Right ventricle myocardium inferior (tissue), 1 donor: ENCODE measurements at regions of chr19 and their contacts with region 1.

Region 1: DNA sequence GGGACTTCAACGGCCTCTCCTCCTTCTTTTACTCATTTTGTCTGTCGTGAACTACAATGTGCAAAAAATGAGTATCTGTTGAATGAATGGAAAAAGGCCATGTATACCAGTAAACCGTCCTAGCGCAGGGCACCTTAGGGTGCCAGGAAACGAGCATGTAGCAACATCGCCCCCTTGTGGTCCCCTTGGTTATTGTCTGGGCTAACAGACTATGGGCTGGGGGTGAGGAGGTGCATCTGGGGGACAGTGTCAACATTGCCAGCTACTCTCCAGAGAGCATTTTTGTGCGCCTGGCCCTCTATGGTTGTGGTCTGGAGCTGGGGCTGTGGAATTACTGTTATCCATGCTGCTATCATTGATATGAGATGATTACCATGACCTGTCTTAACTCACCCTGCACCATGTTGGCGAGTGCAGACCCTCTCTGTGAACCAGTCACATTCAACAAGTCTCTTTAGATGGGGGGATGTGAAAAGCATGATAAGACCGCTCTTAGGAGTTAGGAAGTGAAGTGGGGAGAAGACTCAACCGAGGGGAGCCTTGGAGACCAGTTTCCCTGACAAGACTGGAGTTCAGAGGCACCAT is 22.8 kb upstream of the SIGLEC11 start:
- DNase-seq: peak; percentile 63
- ATAC-seq: no peak

Region 2: DNA sequence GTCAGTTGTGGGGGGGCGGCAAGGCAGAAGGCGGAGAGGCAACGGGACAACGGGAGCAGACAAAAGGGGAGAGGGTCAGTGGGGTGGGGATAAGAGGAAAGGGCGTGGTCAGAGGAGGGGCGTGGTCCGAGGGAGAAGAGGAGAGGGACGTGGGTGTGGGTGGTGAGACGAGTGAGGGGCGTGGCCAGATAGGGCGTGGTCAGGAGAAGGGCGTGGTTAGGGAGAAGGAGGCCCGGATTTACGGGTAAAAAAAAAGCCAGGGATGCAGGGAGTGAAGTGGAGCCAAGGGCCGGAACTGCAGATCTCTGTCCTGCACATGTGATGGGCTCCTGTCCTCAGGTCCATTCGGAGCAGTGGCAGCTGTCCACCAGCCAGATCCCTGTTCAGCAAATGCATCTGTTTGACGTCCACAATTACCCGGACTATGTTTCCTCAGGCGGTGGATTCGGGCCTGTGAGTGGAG is 271.3 kb before region 1 on chr19:
- intact Hi-C with region 1: no loop called
- DNase-seq: no peak
- ATAC-seq: peak; percentile 61

Region 3: DNA sequence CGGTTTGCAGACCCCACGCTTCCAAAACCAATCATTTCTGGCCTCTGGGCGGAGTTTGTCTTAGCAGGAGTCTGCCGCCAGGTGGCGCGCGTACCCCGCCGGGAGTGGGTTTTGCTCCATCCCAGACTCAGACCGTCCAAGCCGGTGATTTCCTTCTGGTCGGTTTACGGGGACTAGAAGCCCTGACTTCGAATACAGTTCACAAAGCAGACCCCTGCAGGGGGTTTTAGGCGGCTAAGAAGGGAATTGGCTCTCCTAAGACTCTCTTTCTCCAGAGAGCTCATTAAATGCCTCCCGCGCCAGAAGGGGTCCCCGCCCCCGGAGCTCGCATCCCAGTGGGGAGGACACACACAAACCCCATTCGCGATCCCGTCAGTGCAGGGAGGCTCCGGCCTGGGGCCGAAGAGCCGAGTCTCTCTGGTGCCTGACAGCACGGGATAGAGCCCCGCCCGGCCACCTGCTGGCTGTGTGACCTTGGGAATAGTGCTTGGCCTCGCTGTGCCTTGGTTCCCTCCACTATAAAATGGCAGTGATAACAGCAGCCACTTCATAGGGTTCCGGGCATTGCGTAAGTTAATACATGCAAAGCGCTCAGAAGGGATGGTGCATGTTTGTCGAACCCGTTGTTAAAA is 45.9 kb before region 1 on chr19:
- intact Hi-C with region 1: loop called (anchors 1 kb)
- DNase-seq: peak; percentile 90
- ATAC-seq: peak; percentile 85

Region 4: DNA sequence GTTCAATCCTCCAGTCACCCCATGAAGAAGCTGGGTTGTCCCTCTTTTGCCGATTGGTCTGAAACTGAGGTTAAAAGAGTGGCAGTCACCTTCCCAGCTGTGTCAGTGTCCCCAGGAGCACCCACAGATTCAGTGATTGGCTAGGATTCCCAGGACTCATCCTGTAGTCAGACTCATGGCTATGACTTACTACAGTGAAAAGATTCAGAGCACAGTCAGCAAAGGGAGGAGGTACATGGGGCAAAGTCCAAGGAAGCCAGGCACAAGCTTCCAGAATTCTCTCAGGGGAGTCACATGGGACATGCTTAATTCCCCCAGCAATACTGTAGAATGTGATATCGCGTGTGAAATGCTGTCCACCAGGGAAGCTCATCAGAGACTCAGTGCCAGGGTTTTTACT is 56.2 kb after region 1 on chr19:
- intact Hi-C with region 1: no loop called
- DNase-seq: no peak
- ATAC-seq: no peak

Region 5: DNA sequence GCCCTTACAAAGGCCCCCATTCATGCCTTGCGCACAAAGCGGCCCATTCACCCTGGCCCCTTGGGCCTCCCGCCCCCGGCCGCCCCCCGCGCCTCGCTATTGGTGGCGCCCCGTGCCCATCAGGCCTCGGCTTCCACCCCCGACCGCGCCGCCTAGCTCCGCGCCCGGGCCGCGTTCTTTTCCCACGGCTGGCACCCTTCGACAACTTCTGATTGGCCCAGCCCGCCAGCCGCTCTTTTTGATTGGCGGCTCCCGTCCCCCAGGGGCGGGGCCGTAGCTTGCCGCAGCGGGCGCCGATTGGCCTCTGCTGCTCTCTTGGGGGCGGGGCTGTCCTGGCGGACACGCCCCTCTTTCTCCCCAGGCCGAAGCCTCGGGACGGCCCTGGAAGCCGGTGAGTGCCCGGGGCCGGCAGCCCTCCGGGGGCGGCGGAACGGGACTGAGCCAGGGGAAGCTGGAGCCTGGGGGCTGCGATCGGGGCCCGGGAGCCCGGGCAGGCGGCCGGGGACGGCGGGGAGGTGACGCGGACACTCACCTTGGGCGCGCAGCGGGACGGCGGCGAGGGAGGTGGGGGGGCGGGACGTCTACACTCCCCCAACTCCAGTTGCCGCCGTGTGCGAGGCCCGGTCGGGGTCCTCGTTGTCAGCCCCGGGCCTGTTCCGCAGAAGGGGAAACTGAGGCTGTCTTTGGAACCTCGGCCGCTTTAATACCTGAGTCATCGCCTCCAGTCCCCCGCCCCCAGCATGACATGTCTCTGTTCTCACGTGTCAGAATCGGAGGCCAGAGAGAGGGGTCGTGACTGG is 219.7 kb after region 1 on chr19 and contains the start of gene MYH14:
- intact Hi-C with region 1: no loop called
- DNase-seq: peak; percentile 90
- ATAC-seq: peak; percentile 90
- total RNA-seq, gene MYH14: 99.3 TPM

Region 6: DNA sequence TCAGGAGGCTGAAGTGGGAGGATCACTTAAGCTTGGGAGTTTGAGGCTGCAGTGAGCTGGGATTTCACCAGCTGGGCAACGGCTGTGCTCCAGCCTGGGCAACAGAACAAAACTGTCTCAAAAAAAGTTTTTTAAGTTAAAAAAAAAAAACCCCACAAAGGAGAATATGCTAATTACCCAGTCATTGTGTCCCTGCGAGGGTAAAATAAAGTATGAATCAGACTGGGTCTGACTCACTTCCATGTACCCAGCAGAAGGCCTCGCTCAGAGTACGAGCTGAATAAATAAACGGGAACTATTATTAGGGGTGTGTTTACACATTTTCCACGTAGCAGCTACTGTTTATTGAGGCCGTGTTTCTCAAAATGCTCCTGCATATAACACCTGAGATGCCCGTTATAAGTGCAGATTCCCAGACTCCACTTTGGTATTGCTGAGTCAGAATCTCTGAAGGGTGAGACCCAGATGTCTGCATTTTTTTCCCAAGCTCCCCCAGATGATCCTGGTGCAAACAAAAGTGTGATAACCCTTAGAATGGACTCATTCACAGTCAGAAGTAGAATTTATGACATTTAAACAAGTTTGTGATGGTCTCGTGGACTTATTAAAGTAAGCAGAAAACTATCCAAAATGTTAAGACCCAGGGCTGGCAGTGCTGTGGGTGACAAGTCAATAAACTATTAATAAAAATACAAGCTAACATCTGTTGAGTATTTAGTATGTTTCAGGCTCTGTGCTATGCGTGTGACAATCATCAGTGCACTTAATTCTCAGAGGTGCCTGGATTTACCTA is 317.3 kb after region 1 on chr19:
- intact Hi-C with region 1: no loop called
- DNase-seq: no peak
- ATAC-seq: no peak